Naive thymus-derived CD4-positive, alpha-beta T cell (primary cell): ENCODE measurements at regions of chr7 and their contacts with region 1.

Region 1: GRCh38 chr7:48822138-48822537 is 102.2 kb upstream of the CDC14C start:
- DNase-seq: no peak
- ATAC-seq: no peak
- H3K4me3 ChIP-seq: no peak overlapping the region
- H3K4me3 Mint-ChIP-seq: no peak overlapping the region
- H3K27ac ChIP-seq: no peak overlapping the region
- H3K27ac Mint-ChIP-seq: no peak overlapping the region
- H3K4me1 ChIP-seq: no peaks in the 10 kb centered on the region
- H3K4me1 Mint-ChIP-seq: no peaks in the 10 kb centered on the region
- H3K27me3 ChIP-seq: no peaks in the 10 kb centered on the region
- H3K27me3 Mint-ChIP-seq: no peaks in the 10 kb centered on the region

Region 2: DNA sequence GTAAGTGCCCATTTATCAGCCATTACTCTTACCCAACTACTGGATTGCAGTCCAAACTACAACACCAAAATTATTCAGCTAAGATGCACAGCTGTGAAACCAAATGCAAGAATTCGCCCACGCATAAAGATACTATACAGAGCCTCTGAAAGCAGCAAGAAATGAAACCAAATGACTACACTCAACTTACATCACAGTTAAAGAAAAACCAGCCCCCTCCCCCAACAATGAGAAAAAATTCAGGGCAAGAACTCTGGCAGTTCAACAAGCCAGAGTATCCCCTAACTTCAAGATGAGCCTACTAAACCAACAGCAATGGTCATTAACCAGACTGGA is 742.2 kb after region 1 on chr7:
- CTCF ChIA-PET with region 1: no interaction called
- POLR2A ChIA-PET with region 1: no interaction called
- intact Hi-C with region 1: loop called in 1 of 2 experiments (anchors 10 kb)
- DNase-seq: no peak
- ATAC-seq: no peak
- H3K4me3 ChIP-seq: no peak overlapping the region
- H3K4me3 Mint-ChIP-seq: no peak overlapping the region
- H3K27ac ChIP-seq: no peak overlapping the region
- H3K27ac Mint-ChIP-seq: no peak overlapping the region
- H3K4me1 ChIP-seq: no peaks in the 10 kb centered on the region
- H3K4me1 Mint-ChIP-seq: no peaks in the 10 kb centered on the region
- H3K27me3 ChIP-seq: no peaks in the 10 kb centered on the region
- H3K27me3 Mint-ChIP-seq: no peaks in the 10 kb centered on the region